ENCODE measurements at regions of chr2 and their contacts with region 1.

Region 1: GRCh38 chr2:69724540-69725159 is 17.3 kb upstream of the ANXA4 start:
- DNase-seq: peak; percentile 86
- H3K4me3 ChIP-seq: peak overlapping the region; percentile 75
- H3K27ac ChIP-seq: no peak overlapping the region
- H3K4me1 ChIP-seq: no peaks in the 10 kb centered on the region; the same call in 1 of the 2 replicates
- H3K27me3 ChIP-seq: no peaks in the 10 kb centered on the region

Region 2: DNA sequence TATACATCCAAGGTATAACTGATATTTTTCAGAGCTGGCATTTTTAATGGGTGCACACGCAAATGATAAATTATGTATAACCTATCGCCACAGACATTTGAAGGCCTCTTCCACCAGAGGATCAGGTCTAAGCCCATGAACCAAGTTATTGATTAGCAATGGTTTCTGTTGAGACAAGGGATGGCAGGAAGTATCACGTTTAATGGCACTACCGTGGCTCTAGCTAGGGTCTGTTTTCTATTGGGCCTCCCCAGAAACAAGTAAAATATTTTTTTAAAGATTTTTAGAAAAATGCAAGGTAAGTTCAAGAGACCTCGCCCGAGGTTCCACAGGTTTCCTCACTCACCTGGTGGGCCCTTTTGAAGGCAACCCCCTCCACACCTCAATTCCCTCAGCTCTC is 338.3 kb before region 1 on chr2:
- in situ Hi-C with region 1: no loop called
- DNase-seq: peak; percentile 17
- H3K4me3 ChIP-seq: peak overlapping the region; percentile 94
- H3K27ac ChIP-seq: peak overlapping the region; percentile 85
- H3K4me1 ChIP-seq: peaks cover 42% of the 10 kb centered on the region
- H3K27me3 ChIP-seq: no peaks in the 10 kb centered on the region

Region 3: DNA sequence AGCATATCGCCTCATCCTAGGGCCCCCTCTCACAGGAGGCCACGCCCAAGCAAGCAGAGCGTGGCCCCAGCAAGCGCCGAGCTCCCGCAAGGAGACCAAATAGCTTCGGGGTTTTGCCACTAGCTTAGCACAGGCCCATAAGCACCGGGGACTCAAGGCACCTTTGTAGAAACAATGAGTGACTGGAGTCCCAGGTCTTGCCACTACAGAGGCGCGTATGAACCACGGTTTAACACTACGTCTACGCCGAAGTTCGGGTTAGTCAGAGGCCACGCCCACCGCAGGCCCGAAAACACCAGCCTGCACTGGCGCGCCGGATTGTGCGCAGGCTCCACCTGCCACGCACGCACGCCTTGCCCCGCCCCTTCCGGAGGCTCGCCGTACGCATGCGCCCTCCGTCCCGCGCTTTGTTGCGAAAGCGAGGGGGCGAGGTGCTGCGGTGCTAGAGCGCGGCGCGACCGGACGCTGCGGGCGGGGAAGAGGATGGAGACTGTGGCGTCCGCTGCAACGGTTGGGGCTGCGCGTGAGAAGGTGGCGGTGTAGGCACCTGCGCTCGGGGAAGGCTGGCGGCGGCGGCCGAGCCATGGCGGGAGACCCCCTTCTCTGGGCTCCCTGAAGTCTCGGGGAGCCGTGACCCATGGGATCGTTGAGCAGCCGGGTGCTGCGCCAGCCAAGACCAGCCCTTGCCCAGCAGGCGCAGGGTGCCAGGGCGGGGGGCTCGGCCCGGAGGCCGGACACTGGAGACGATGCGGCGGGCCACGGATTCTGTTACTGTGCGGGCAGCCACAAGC is 104.8 kb after region 1 on chr2 and contains the start of gene GMCL1:
- in situ Hi-C with region 1: loop called (anchors 5 kb)
- DNase-seq: peak; percentile 99
- H3K4me3 ChIP-seq: peak within 1 kb of the TSS; percentile 80
- H3K27ac ChIP-seq: peak within 1 kb of the TSS; percentile 95
- H3K4me1 ChIP-seq: peaks cover 22% of the 10 kb centered on the region
- H3K27me3 ChIP-seq: no peaks in the 10 kb centered on the region
- total RNA-seq, gene GMCL1: 9.6 and 15.7 TPM in 2 replicates

Measured in GM23248 (cell line).